Uterus (tissue), 4 donors: ENCODE measurements at regions of chr14 and their contacts with region 1.

Region 1: GRCh38 chr14:91286530-91286937 is 42.0 kb upstream of the GPR68 start:
- DNase-seq: peak; percentile 74
- H3K4me3 ChIP-seq: no peak overlapping the region
- H3K27ac ChIP-seq: no peak overlapping the region
- H3K4me1 ChIP-seq: peaks cover 0 to 5% of the 10 kb centered on the region in 2 donors
- H3K27me3 ChIP-seq: no peaks in the 10 kb centered on the region
- CTCF ChIP-seq: peak; percentile 83 to 92 (median 87)
- POLR2A ChIP-seq: no peak

Region 2: DNA sequence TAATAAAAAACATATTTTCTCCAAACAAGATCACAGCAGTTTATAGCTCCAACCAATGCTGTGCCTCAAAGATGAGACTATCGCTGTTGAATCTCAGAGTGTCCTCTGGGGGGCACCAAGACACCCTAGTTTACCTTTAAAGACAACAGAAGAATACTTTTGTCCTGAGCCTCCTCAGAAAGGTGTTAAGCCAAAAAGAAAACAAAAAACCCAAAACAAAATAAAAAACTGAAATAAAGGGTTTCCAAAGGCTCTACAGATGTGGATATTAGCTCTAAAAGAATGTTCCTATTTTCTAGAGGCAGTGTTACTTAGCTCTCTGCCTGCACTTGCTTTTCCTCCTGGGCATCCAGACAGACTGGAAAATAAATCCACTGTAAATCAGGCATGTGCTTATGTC is 383.4 kb before region 1 on chr14:
- intact Hi-C with region 1: loop called (anchors 10 kb)
- DNase-seq: peak; percentile 47 to 66
- H3K4me3 ChIP-seq: no peak overlapping the region
- H3K27ac ChIP-seq: no peak overlapping the region
- H3K4me1 ChIP-seq: no peaks in the 10 kb centered on the region
- H3K27me3 ChIP-seq: no peaks in the 10 kb centered on the region
- CTCF ChIP-seq: peak; percentile 59 to 81 (median 68)
- POLR2A ChIP-seq: no peak